CD8-positive, alpha-beta T cell (primary cell): ENCODE measurements at regions of chr4 and their contacts with region 1.

Region 1: GRCh38 chr4:99462875-99463464 is 27.8 kb upstream of the ADH7 start:
- DNase-seq: peak; percentile 3 to 64 (median 38)
- ATAC-seq: peak; percentile 67
- H3K4me3 ChIP-seq: no peak overlapping the region
- H3K4me3 Mint-ChIP-seq: no peak overlapping the region
- H3K27ac ChIP-seq: no peak overlapping the region
- H3K27ac Mint-ChIP-seq: no peak overlapping the region
- H3K4me1 ChIP-seq: no peaks in the 10 kb centered on the region
- H3K4me1 Mint-ChIP-seq: no peaks in the 10 kb centered on the region
- H3K27me3 ChIP-seq: peaks cover 0 to 2% of the 10 kb centered on the region in 2 experiments
- H3K27me3 Mint-ChIP-seq: peaks cover 13% of the 10 kb centered on the region
- CTCF ChIP-seq: peak; percentile 75

Region 2: GRCh38 chr4:98939892-98940298 is 523.1 kb before region 1 on chr4:
- CTCF ChIA-PET with region 1: no interaction called
- POLR2A ChIA-PET with region 1: no interaction called
- intact Hi-C with region 1: loop called in 1 of 2 experiments (anchors 1 kb)
- DNase-seq: peak in 2 of 9 experiments; percentile 39 to 51
- ATAC-seq: no peak
- H3K4me3 ChIP-seq: no peak overlapping the region
- H3K4me3 Mint-ChIP-seq: no peak overlapping the region
- H3K27ac ChIP-seq: no peak overlapping the region
- H3K27ac Mint-ChIP-seq: no peak overlapping the region
- H3K4me1 ChIP-seq: peaks cover 5% of the 10 kb centered on the region
- H3K4me1 Mint-ChIP-seq: peaks cover 7% of the 10 kb centered on the region
- H3K27me3 ChIP-seq: no peaks in the 10 kb centered on the region
- H3K27me3 Mint-ChIP-seq: no peaks in the 10 kb centered on the region
- CTCF ChIP-seq: peak; percentile 64

Region 3: DNA sequence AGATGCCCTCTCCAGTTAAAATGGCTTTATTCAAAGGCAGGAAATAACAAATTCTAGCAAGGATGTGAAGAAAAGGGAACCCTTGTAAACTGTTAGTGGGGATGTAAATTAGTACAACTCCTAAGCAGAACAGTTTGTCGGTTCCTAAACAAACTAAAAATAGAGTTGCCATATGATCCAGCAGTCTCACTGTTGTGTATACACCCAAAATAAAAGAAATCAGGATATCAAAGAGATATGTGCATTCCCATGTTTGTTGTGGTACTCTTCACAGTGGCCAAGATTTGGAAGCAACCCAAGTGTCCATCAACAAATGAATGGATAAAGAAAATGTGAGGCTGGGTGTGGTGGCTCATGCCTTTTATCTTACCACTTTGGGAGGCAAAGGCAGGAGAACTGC is 64.0 kb before region 1 on chr4:
- CTCF ChIA-PET with region 1: no interaction called
- POLR2A ChIA-PET with region 1: no interaction called
- intact Hi-C with region 1: no loop called
- DNase-seq: no peak
- ATAC-seq: no peak
- H3K4me3 ChIP-seq: no peak overlapping the region
- H3K4me3 Mint-ChIP-seq: no peak overlapping the region
- H3K27ac ChIP-seq: no peak overlapping the region
- H3K27ac Mint-ChIP-seq: no peak overlapping the region
- H3K4me1 ChIP-seq: no peaks in the 10 kb centered on the region
- H3K4me1 Mint-ChIP-seq: no peaks in the 10 kb centered on the region
- H3K27me3 ChIP-seq: no peaks in the 10 kb centered on the region
- H3K27me3 Mint-ChIP-seq: no peaks in the 10 kb centered on the region
- CTCF ChIP-seq: no peak

Region 4: DNA sequence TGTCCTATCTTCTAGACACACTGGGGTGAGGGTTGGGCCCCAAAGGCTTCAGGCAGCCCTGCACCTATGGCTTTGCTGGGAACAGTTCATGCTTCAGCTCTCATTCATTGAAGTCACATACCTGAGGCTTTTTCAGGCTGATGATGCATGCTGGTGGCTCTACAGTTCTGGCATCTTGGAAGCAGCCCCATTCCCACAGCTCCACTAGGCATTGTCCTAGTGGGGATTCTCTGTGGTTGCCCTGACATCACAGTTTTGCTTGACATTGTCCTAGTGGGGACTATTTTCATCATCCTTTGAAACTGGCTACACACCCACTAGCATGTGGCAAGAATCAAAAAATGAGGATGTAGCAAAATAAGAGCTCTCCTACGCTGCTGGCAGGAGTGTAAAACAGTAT is 10.2 kb after region 1 on chr4:
- CTCF ChIA-PET with region 1: interaction called, 14 read pairs
- POLR2A ChIA-PET with region 1: no interaction called
- intact Hi-C with region 1: no loop called
- DNase-seq: no peak
- ATAC-seq: no peak
- H3K4me3 ChIP-seq: no peak overlapping the region
- H3K4me3 Mint-ChIP-seq: no peak overlapping the region
- H3K27ac ChIP-seq: no peak overlapping the region
- H3K27ac Mint-ChIP-seq: no peak overlapping the region
- H3K4me1 ChIP-seq: no peaks in the 10 kb centered on the region
- H3K4me1 Mint-ChIP-seq: no peaks in the 10 kb centered on the region
- H3K27me3 ChIP-seq: no peaks in the 10 kb centered on the region
- H3K27me3 Mint-ChIP-seq: no peaks in the 10 kb centered on the region
- CTCF ChIP-seq: no peak

Region 5: DNA sequence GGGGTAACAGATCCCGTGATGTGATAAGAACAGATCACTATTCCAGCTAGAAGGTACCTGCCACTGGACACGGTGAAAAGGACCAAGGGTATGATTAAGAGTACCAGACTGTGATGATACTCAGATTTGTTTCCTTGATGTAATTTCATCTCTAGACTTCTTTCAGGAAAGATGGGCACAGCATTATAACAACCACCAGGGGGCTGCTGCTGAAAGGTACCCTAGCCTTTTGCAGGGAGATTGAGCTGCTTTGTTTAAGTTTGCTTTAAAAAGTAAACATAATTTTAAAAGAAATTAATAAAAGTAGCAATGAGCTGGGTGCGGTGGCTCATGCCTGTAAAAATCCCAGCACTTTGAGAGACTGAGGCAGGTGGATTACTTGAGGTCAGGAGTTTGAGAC is 909.5 kb after region 1 on chr4:
- CTCF ChIA-PET with region 1: no interaction called
- POLR2A ChIA-PET with region 1: no interaction called
- intact Hi-C with region 1: no loop called
- DNase-seq: peak in 2 of 9 experiments; percentile 8 to 10
- ATAC-seq: no peak
- H3K4me3 ChIP-seq: no peak overlapping the region
- H3K4me3 Mint-ChIP-seq: no peak overlapping the region
- H3K27ac ChIP-seq: no peak overlapping the region
- H3K27ac Mint-ChIP-seq: no peak overlapping the region
- H3K4me1 ChIP-seq: no peaks in the 10 kb centered on the region
- H3K4me1 Mint-ChIP-seq: no peaks in the 10 kb centered on the region
- H3K27me3 ChIP-seq: no peaks in the 10 kb centered on the region
- H3K27me3 Mint-ChIP-seq: peaks cover 2% of the 10 kb centered on the region
- CTCF ChIP-seq: no peak